H1 (cell line): ENCODE measurements at regions of chr3 and their contacts with region 1.

Region 1: GRCh38 chr3:197912770-197913476 is 37.1 kb upstream of the RPL35A start:
- DNase-seq: no peak
- H3K4me3 ChIP-seq: no peak overlapping the region
- H3K27ac ChIP-seq: peak overlapping the region; percentile 69; the same call in 1 of the 2 replicates
- H3K4me1 ChIP-seq: peaks cover 0 to 9% (median 2%) of the 10 kb centered on the region in 4 experiments; a peak in 2 of 7 replicates
- H3K27me3 ChIP-seq: no peaks in the 10 kb centered on the region
- CTCF ChIP-seq: no peak
- EP300 ChIP-seq: no peak
- POLR2A ChIP-seq: no peak
- RAD21 ChIP-seq: no peak

Region 2: DNA sequence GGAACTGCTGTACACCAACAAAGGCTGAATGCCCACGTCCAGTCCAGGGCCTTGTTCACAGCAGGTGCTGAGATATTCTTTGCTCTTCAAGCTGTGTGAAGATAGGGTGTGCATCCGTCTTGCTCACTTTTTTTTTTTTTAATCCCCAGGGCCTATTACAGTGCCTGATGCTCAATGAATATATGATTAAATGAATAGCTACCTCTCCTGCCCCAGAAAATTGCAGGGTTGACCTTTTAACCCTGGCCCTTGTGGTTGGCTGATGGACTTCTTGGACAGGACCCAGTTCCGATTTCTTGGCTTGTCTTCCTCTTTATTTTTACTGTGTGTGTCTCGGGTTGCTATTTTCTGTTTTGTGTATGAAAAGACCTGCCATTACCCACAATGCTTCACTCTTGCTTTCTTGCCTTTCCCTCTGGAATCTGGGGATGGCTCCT is 166.1 kb before region 1 on chr3:
- CTCF ChIA-PET with region 1: no interaction called
- POLR2A ChIA-PET with region 1: no interaction called
- DNase-seq: no peak
- H3K4me3 ChIP-seq: no peak overlapping the region
- H3K27ac ChIP-seq: no peak overlapping the region
- H3K4me1 ChIP-seq: peaks cover 0 to 8% (median 3%) of the 10 kb centered on the region in 4 experiments; a peak in 6 of 7 replicates
- H3K27me3 ChIP-seq: peaks cover 0 to 25% (median 13%) of the 10 kb centered on the region in 4 experiments; a peak in 6 of 7 replicates
- CTCF ChIP-seq: no peak
- EP300 ChIP-seq: no peak
- POLR2A ChIP-seq: no peak
- RAD21 ChIP-seq: no peak

Region 3: DNA sequence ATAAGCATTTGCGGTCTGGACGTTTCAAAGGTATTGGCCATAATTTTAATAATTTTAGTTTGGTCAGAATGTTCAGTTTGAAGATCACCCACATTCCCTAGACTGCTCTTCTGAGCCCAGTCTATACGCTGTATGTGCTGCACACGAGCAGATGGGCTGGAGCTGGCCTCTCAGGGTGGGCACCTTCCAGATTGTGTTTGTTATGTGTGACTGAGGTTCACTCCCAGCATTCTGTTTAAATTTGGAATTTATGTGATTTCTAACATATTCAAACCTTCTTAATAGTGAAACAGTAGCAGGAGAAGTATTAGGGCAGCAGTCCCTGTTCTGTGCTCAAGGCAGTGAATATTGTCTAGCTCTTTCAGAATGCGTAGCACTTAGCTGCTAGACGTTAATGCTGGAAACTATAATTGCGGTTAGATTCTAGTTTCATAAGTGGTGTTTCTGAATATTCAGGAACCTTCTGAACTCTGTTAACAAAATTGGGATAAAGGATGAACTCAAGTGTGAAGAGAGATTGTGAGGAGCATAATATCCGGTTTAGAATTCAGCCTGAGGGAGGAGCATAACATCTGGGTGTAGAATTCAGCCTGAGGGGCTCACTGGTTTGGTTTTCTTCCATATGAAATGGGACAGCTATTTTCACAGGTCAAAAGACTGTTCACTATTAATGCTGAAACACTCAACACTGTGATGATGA is 31.5 kb before region 1 on chr3:
- CTCF ChIA-PET with region 1: no interaction called
- POLR2A ChIA-PET with region 1: no interaction called
- DNase-seq: no peak
- H3K4me3 ChIP-seq: no peak overlapping the region
- H3K27ac ChIP-seq: no peak overlapping the region
- H3K4me1 ChIP-seq: peaks cover 4 to 14% (median 10%) of the 10 kb centered on the region in 4 experiments; a peak in 6 of 7 replicates
- H3K27me3 ChIP-seq: peaks cover 0 to 5% (median 2%) of the 10 kb centered on the region in 4 experiments; a peak in 2 of 7 replicates
- CTCF ChIP-seq: no peak
- EP300 ChIP-seq: no peak
- POLR2A ChIP-seq: no peak
- RAD21 ChIP-seq: no peak

Region 4: GRCh38 chr3:197926418-197926817 is 13.5 kb after region 1 on chr3:
- CTCF ChIA-PET with region 1: interaction called, 16 read pairs
- POLR2A ChIA-PET with region 1: interaction called, 4 read pairs
- DNase-seq: peak; percentile 21 to 89
- H3K4me3 ChIP-seq: no peak overlapping the region
- H3K27ac ChIP-seq: no peak overlapping the region
- H3K4me1 ChIP-seq: no peaks in the 10 kb centered on the region
- H3K27me3 ChIP-seq: no peaks in the 10 kb centered on the region
- CTCF ChIP-seq: peak; percentile 62 to 93 (median 88)
- EP300 ChIP-seq: no peak
- POLR2A ChIP-seq: no peak
- RAD21 ChIP-seq: peak; percentile 65 to 66

Region 5: GRCh38 chr3:197942956-197943556 is 30.1 kb after region 1 on chr3:
- CTCF ChIA-PET with region 1: interaction called, 22 read pairs
- POLR2A ChIA-PET with region 1: interaction called, 3 read pairs
- DNase-seq: no peak
- H3K4me3 ChIP-seq: no peak overlapping the region
- H3K27ac ChIP-seq: no peak overlapping the region
- H3K4me1 ChIP-seq: no peaks in the 10 kb centered on the region
- H3K27me3 ChIP-seq: no peaks in the 10 kb centered on the region
- CTCF ChIP-seq: peak in 2 of 3 experiments; percentile 55 to 67; a peak in 3 of 4 replicates
- EP300 ChIP-seq: no peak
- POLR2A ChIP-seq: no peak
- RAD21 ChIP-seq: peak; percentile 40 to 51; a peak in 3 of 4 replicates

Region 6: DNA sequence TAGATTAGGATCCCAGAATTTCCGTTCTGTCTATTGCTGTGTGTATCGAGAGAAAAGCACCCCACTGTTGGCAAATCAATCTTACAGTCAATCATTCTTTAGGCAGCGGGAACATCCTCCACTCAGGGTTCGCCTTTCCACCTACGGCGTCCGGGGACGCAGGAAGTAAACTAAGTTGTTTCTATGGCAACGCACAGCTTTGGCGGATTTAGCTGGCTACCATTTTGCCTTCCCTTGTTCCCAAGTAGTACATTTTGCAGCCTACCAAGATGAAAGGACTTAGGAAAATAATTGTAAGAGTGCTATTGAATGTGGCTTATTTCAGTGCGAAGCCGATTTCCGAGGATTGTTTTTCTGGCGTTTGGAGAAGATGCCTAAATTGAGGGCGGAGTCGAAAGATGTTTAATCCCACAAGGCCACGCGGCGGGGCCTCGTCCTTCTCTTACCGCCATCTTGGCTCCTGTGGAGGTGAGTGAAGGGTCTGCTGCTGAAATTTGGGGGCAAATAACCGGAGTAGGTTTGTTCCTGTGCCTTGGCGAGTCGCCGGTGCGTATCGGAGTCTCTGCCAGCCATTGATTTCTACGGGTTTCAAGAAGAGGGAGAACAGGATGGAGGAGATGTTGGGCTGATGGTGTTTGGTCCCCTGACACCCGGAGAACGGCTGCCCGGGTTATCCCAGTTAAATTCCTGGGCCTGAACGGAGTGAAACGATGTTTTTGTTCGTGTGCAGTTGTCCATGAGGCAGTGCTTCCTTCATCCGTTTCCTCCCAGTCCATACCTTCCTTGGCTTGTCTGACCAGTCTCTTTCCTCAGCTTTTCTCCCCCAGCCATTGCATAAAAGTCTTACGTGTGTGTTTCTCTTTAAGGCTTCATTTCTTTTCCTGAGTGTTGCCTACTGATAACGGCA is 37.1 kb after region 1 on chr3 and contains the start of gene RPL35A:
- CTCF ChIA-PET with region 1: no interaction called
- POLR2A ChIA-PET with region 1: interaction called, 11 read pairs
- DNase-seq: peak; percentile 63 to 90
- H3K4me3 ChIP-seq: peak within 1 kb of the TSS; percentile 95 to 100 (median 98)
- H3K27ac ChIP-seq: peak within 1 kb of the TSS; percentile 96
- H3K4me1 ChIP-seq: peaks cover 0 to 8% (median 4%) of the 10 kb centered on the region in 4 experiments; a peak in 5 of 7 replicates
- H3K27me3 ChIP-seq: no peaks in the 10 kb centered on the region
- CTCF ChIP-seq: no peak
- EP300 ChIP-seq: 0 out of 3 replicates have a peak, but pooled peaks of 1 of the 2 experiments have one; percentile 4
- POLR2A ChIP-seq: peak; percentile 93 to 96
- RAD21 ChIP-seq: no peak
- total RNA-seq, gene RPL35A: 1,393 and 1,439 TPM in 2 replicates